Esophagus muscularis mucosa (tissue), 4 donors: ENCODE measurements at regions of chr10 and their contacts with region 1.

Region 1: GRCh38 chr10:59234816-59235429 is 58.5 kb downstream of the PHYHIPL start:
- DNase-seq: no peak
- H3K4me3 ChIP-seq: no peak overlapping the region
- H3K27ac ChIP-seq: no peak overlapping the region
- H3K4me1 ChIP-seq: peaks cover 0 to 11% (median 5%) of the 10 kb centered on the region in 4 donors
- H3K27me3 ChIP-seq: no peaks in the 10 kb centered on the region
- CTCF ChIP-seq: peak; percentile 48 to 61 (median 55)
- EP300 ChIP-seq: no peak
- POLR2A ChIP-seq: no peak

Region 2: GRCh38 chr10:58781873-58782488 is 452.9 kb before region 1 on chr10:
- intact Hi-C with region 1: loop called (anchors 10 kb)
- DNase-seq: no peak
- H3K4me3 ChIP-seq: no peak overlapping the region
- H3K27ac ChIP-seq: no peak overlapping the region
- H3K4me1 ChIP-seq: peaks cover 5 to 24% (median 12%) of the 10 kb centered on the region in 4 donors
- H3K27me3 ChIP-seq: no peaks in the 10 kb centered on the region
- CTCF ChIP-seq: peak; percentile 59 to 60 (median 59)
- EP300 ChIP-seq: no peak
- POLR2A ChIP-seq: no peak

Region 3: GRCh38 chr10:58952747-58953466 is 282.0 kb before region 1 on chr10:
- intact Hi-C with region 1: loop called (anchors 5 kb)
- DNase-seq: no peak
- H3K4me3 ChIP-seq: peak overlapping the region in 1 of 4 donors; percentile 26
- H3K27ac ChIP-seq: peak overlapping the region; percentile 49 to 62 (median 58)
- H3K4me1 ChIP-seq: peaks cover 0 to 41% (median 29%) of the 10 kb centered on the region in 4 donors
- H3K27me3 ChIP-seq: no peaks in the 10 kb centered on the region
- CTCF ChIP-seq: peak; percentile 79 to 85 (median 83)
- EP300 ChIP-seq: no peak
- POLR2A ChIP-seq: no peak

Region 4: DNA sequence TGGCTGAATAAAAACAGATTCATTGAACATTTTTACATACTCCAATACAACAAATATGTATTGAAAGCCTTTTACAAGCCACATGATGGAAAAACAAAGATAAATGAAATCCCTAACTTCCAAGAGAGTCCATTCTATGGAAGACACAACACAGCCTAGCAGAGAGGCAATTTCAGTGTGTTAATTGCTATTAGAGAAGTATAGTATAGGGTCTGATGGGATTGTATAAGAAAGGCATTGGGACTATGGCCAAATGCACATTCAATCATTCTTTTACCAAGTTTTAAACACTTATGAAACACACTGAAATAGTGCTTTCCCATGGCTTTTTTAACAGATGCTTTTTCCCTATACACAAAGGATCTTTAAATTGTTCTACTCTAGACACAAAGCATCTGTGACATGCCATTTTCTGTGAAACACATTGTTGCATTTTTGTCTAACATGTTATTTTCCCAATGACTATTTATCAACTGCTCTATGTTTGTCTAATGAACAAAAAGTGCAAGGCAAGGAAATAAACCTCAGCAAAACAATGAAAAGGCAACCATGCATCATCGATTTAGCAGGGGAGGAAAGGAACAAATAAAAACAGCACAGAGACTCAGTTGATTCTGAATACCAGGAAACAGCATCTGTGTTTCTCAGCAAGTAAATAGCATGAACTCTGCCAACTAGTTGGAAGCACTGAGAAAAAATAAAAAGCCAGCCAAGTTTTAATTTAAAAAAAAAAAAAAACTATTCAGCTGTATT is 100.9 kb before region 1 on chr10:
- intact Hi-C with region 1: no loop called
- DNase-seq: no peak
- H3K4me3 ChIP-seq: no peak overlapping the region
- H3K27ac ChIP-seq: no peak overlapping the region
- H3K4me1 ChIP-seq: no peaks in the 10 kb centered on the region
- H3K27me3 ChIP-seq: no peaks in the 10 kb centered on the region
- CTCF ChIP-seq: no peak
- EP300 ChIP-seq: no peak
- POLR2A ChIP-seq: no peak

Region 5: GRCh38 chr10:59465088-59465487 is 230.2 kb after region 1 on chr10:
- intact Hi-C with region 1: loop called (anchors 5 kb)
- DNase-seq: no peak
- H3K4me3 ChIP-seq: no peak overlapping the region
- H3K27ac ChIP-seq: no peak overlapping the region
- H3K4me1 ChIP-seq: peaks cover 0 to 5% (median 2%) of the 10 kb centered on the region in 4 donors
- H3K27me3 ChIP-seq: no peaks in the 10 kb centered on the region
- CTCF ChIP-seq: peak; percentile 40 to 46 (median 44)
- EP300 ChIP-seq: no peak
- POLR2A ChIP-seq: no peak

Region 6: GRCh38 chr10:59808896-59809643 is 574.1 kb after region 1 on chr10:
- intact Hi-C with region 1: loop called (anchors 10 kb)
- DNase-seq: no peak
- H3K4me3 ChIP-seq: no peak overlapping the region
- H3K27ac ChIP-seq: no peak overlapping the region
- H3K4me1 ChIP-seq: peaks cover 4 to 29% (median 14%) of the 10 kb centered on the region in 4 donors
- H3K27me3 ChIP-seq: no peaks in the 10 kb centered on the region
- CTCF ChIP-seq: peak; percentile 49 to 64 (median 55)
- EP300 ChIP-seq: no peak
- POLR2A ChIP-seq: no peak